ENCODE measurements at regions of chr11 and their contacts with region 1.

Region 1: DNA sequence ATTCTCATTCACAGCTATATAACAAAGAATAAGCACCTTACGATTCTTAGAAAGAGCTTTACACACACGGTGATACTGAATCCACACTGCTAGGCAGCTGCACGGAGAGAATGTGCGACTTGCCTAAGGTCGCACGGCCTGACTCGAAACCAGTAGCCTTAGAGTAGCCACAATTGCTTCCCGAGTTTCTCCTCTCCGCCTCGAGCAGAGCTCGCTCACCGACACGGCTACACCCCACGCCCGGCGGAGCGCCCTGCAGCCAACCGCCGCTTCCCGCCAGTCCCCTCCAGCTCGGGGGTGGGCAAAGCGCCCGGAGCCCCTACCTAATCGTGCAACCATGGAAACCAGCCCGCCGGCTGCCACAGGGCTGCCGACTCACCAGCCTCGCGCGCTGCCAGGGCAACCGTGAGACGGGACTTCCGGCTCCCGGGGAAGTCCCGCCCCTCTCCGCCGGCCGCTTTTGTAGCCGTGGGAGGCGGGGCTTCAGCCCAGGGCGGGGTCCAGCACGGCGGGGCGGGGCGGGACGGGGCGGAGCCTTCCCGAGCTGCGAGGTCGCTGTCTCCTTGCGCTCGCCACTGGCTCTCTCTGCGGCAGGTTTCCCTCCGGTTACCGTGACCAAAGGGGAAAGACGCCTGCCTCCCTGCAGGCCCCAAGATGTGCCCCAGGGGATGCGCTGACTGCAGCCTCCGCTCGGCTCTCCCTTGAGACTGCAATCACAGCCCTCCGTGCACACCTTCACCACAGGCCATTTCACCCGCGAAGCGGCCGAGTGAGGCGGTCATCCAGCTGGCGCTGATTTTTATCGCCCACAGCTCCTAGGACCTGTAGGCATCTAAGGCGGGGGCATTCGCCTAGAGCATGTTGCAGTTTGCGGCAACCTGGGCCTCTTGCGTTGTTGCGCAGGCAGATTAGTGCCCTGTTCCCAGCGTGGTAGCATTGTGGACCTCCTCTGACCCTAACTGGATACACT is 1.1 kb downstream of the BSCL2 start:
- DNase-seq: peak; percentile 95
- H3K4me3 Mint-ChIP-seq: peak overlapping the region; percentile 88
- H3K27ac Mint-ChIP-seq: peak overlapping the region; percentile 24
- H3K4me1 Mint-ChIP-seq: peaks cover 40% of the 10 kb centered on the region
- H3K27me3 Mint-ChIP-seq: no peaks in the 10 kb centered on the region

Region 2: GRCh38 chr11:62645956-62646824 is 60.0 kb before region 1 on chr11 and contains the start of gene GANAB:
- CTCF ChIA-PET with region 1: interaction called, 4 read pairs
- intact Hi-C with region 1: loop called (anchors 1 kb)
- DNase-seq: peak; percentile 100
- H3K4me3 Mint-ChIP-seq: peak within 1 kb of the TSS; percentile 99
- H3K27ac Mint-ChIP-seq: peak within 1 kb of the TSS; percentile 95
- H3K4me1 Mint-ChIP-seq: peaks cover 35% of the 10 kb centered on the region
- H3K27me3 Mint-ChIP-seq: no peaks in the 10 kb centered on the region
- total RNA-seq, gene GANAB: 221 to 230 TPM

Region 3: DNA sequence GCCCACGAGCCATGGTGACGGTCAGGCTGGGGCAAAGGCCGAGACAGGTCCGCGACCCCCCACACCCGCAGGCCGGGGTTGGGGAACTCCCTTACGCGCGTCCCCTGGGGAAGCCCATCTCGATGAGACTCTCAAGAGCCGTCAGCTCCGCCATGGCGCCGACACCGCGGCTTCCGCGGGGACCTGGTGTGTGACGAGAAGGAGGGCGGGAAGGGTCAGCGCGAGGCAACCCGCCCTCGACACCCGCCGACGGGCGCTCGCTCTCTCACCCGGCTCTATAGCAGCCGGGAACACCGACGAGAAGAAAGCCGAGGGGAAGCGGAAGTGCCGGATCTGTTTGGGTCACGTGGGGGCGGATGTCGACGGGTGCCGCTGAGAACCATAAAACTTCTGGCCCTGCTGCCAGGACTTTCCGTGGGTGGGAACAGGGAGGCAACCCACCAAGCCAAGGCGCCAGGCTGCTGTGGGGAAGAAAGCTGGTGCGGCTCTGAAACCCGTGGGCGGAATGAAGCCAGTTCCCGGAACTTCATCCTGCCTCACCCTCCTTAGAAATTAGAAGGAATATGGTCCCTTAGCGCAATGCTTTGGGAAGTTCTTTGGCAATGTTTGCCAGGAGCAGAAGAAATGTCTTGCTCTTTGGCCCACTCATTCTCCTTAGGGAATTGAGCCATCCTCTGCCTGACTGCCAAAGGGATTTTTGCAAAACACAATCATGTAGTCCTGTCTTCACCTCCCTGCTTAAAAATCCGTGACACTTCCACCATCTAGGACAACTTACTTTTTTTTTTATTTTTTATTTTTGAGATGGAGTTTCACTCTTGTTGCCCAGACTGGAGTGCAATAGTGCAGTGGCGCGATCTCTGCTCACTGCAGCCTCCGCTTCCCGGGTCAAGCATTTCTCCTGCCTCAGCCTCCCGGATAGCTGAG is 27.1 kb before region 1 on chr11 and contains the start of gene UBXN1:
- CTCF ChIA-PET with region 1: interaction called, 17 read pairs
- intact Hi-C with region 1: loop called (anchors 1 kb)
- DNase-seq: peak; percentile 91
- H3K4me3 Mint-ChIP-seq: peak within 1 kb of the TSS; percentile 87
- H3K27ac Mint-ChIP-seq: peak within 1 kb of the TSS; percentile 94
- H3K4me1 Mint-ChIP-seq: peaks cover 32% of the 10 kb centered on the region
- H3K27me3 Mint-ChIP-seq: no peaks in the 10 kb centered on the region
- total RNA-seq, gene UBXN1: 121 to 124 TPM

Region 4: DNA sequence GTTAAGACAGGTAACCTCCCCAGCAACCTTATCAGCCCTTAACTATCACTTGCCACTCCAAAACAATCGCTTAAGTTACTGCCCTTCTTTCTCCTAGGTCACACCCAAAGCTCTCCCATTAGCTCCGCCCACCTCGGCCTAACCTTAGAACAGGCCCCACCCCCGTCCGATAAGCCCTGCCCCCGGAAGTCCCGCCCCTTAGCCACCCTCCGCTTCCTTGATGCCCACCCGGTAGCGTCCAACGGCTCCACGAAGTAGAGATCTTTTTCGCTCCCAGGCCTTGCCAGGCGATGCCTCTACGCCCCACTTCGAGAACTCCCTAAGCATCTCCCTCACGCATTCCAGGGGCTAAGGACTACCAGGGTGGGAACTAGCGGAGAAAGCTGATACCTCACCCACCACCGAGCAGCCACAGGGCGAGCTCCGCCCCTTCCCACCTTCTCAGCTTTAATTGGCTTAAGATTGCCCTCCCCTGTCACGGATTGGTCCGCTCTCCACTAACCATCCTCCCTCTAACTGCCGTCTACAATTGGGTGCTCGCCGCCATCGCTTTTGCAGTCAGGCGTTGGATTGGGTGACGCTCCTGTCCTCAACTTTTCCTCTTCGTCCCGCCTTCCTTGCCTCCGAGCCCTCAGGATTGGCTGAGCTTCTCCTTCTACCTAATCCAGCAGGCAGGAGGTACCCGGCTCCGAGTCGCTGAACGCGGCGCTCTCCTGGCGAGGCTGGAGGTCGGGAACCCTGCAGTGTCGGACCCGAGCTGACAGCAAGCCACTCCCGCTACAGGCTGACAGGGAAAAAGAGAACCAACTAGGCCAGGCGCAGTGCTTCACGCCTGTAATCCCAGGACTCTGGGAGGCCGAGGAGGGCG is 47.8 kb after region 1 on chr11 and contains the start of gene ZBTB3:
- CTCF ChIA-PET with region 1: no interaction called
- intact Hi-C with region 1: loop called (anchors 1 kb)
- DNase-seq: peak; percentile 99
- H3K4me3 Mint-ChIP-seq: peak within 1 kb of the TSS; percentile 98
- H3K27ac Mint-ChIP-seq: peak within 1 kb of the TSS; percentile 96
- H3K4me1 Mint-ChIP-seq: peaks cover 34% of the 10 kb centered on the region
- H3K27me3 Mint-ChIP-seq: no peaks in the 10 kb centered on the region
- total RNA-seq, gene ZBTB3: 12.1 to 13.5 TPM

Region 5: DNA sequence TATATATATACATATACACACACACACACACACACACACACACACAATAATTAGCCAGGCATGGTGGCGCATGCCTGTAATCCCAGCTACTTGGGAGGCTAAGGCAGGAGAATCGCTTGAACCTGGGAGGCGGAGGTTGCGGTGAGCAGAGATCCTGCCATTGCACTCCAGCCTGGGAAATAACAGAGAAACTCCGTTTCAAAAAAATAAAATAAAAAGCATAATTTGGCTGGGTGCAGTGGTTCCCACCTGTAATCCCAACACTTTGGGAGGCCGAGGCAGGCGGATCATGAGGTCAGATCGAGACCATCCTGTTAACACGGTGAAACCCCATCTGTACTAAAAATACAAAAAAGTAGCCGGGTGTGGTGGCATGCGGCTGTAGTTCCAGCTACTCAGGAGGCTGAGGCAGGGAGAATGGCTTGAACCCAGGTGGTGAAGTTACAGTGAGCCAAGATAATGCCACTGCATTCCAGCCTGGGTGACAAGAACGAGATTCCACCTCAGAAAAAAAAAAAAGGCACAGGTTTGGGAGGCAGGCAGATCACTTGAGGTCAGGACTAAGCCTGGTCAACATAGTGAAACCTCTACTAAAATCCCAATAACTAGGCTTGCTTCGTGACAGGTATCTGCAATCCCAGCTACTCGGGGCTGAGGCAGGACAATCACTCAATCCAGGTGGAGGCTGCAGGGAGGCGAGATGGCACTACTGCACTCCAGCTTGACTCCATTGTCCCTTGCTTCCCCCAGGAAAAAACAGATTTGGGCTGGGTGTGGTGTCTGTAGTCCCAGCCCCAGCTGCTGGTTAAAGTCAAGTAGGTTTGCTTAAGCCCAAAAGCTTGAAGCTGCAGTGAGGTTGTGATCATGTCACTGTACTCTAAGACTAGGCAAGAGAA is 145.0 kb after region 1 on chr11:
- CTCF ChIA-PET with region 1: no interaction called
- intact Hi-C with region 1: no loop called
- DNase-seq: no peak
- H3K4me3 Mint-ChIP-seq: peak overlapping the region; percentile 99
- H3K27ac Mint-ChIP-seq: peak overlapping the region; percentile 84
- H3K4me1 Mint-ChIP-seq: peaks cover 23% of the 10 kb centered on the region
- H3K27me3 Mint-ChIP-seq: no peaks in the 10 kb centered on the region

Measured in activated naive CD4-positive, alpha-beta T cell treated with anti-CD3 and anti-CD28 coated beads for 36 hours (primary cell).